ENCODE measurements at regions of chr5 and their contacts with region 1.

Region 1: GRCh38 chr5:115962503-115963402 is 478 bp downstream of the LVRN start:
- DNase-seq: peak; percentile 43
- H3K4me3 ChIP-seq: peak overlapping the region; percentile 12 to 48 (median 32)
- H3K27ac ChIP-seq: no peak overlapping the region
- H3K4me1 ChIP-seq: peaks cover 11% of the 10 kb centered on the region
- H3K27me3 ChIP-seq: peaks cover 3 to 40% of the 10 kb centered on the region in 2 experiments
- CTCF ChIP-seq: peak in 1 of 2 donors; percentile 9
- POLR2A ChIP-seq: no peak

Region 2: GRCh38 chr5:115907177-115907576 is 55.6 kb before region 1 on chr5:
- CTCF ChIA-PET with region 1: no interaction called
- POLR2A ChIA-PET with region 1: no interaction called
- dilution Hi-C with region 1: no loop called
- intact Hi-C with region 1: no loop called
- DNase-seq: no peak
- H3K4me3 ChIP-seq: no peak overlapping the region
- H3K27ac ChIP-seq: no peak overlapping the region
- H3K4me1 ChIP-seq: no peaks in the 10 kb centered on the region
- H3K27me3 ChIP-seq: no peaks in the 10 kb centered on the region
- CTCF ChIP-seq: no peak
- POLR2A ChIP-seq: no peak

Region 3: DNA sequence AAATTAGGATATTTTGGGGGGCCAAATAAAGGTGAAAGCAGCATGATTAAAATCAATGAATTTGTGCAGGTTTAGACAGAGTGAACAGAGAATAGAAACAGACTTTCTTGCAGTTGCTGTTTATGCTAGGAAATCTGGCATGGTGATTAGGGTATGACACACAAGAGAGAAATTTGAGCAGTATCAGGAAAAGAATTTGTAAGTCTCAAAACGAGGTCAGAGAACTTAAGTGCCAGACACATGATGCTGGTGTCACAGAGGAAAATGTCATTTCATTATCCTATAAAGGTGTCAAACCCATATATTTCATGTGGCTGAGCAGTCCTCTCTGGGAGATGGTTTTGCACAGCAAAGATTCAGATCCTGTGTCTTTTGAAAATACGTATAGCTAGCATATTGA is 15.2 kb after region 1 on chr5:
- CTCF ChIA-PET with region 1: interaction called, 3 read pairs
- POLR2A ChIA-PET with region 1: no interaction called
- dilution Hi-C with region 1: no loop called
- intact Hi-C with region 1: loop called (anchors 1 kb)
- DNase-seq: peak; percentile 90
- H3K4me3 ChIP-seq: no peak overlapping the region
- H3K27ac ChIP-seq: peak overlapping the region; percentile 45
- H3K4me1 ChIP-seq: peaks cover 19% of the 10 kb centered on the region
- H3K27me3 ChIP-seq: no peaks in the 10 kb centered on the region
- CTCF ChIP-seq: no peak
- POLR2A ChIP-seq: peak; percentile 54

Region 4: GRCh38 chr5:116281309-116281708 is 318.6 kb after region 1 on chr5:
- CTCF ChIA-PET with region 1: no interaction called
- POLR2A ChIA-PET with region 1: no interaction called
- dilution Hi-C with region 1: no loop called
- intact Hi-C with region 1: no loop called
- DNase-seq: peak; percentile 24
- H3K4me3 ChIP-seq: peak overlapping the region in 1 of 3 experiments; percentile 15
- H3K27ac ChIP-seq: no peak overlapping the region
- H3K4me1 ChIP-seq: no peaks in the 10 kb centered on the region
- H3K27me3 ChIP-seq: no peaks in the 10 kb centered on the region
- CTCF ChIP-seq: no peak
- POLR2A ChIP-seq: no peak

Measured in endothelial cell of umbilical vein (primary cell).